Common myeloid progenitor, CD34-positive (primary cell): ENCODE measurements at regions of chr16 and their contacts with region 1.

Region 1: DNA sequence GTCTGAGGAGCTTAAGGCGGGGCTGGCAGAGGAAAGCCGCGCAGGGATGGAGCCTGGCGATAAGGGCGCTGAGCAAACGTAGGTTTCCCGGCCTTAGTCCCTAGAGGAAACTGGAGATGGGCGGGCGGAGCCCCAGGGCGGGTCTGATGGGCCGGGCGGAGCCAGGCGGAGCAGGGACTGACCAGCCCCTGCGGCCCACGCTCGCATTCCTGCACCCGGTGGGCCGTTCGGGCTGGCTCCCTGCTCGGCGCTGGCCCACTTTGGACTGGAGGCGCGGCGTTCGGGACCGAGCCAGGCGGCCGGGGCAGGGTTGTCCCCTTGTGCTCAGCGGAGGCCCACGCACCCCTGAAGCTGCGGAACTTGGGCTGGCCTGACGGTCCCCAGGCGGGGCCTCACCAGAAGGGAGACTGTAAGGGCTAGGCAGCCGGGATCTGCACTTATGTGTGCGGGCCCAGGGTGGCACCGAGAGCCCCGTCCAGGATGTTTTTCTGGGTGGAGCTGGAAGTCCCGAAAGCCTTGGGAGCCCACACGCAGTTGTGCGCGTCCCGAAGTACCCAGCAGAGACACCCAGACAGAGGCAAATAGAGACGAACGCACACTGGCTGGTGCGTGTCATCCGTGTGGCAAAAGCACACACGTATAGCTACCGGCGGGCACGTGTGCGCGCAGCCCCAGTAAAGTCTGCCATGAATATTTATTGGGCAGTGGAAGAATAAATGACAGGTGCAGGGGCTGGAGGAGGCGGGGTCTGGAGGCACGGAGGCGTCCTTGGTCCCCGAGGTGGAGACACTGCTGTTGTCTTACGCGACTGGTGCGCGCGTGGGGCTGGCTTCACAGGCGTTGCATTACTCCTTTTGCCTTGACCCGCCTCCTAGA is 1.4 kb downstream of the PYDC1 start:
- DNase-seq: peak in 2 of 3 donors; percentile 49 to 60
- H3K4me3 ChIP-seq: peak overlapping the region in 6 of 7 experiments; percentile 43 to 70 (median 51)
- H3K27ac ChIP-seq: no peak overlapping the region
- H3K4me1 ChIP-seq: peaks cover 2 to 40% (median 33%) of the 10 kb centered on the region in 4 experiments
- H3K27me3 ChIP-seq: peaks cover 0 to 32% (median 24%) of the 10 kb centered on the region in 5 experiments

Region 2: GRCh38 chr16:30893744-30894539 is 321.6 kb before region 1 on chr16 and contains the start of gene BCL7C:
- CTCF ChIA-PET with region 1: no interaction called
- POLR2A ChIA-PET with region 1: no interaction called
- DNase-seq: peak; percentile 82 to 88 (median 82)
- H3K4me3 ChIP-seq: peak within 1 kb of the TSS; percentile 69 to 93 (median 84)
- H3K27ac ChIP-seq: peak within 1 kb of the TSS; percentile 25 to 84
- H3K4me1 ChIP-seq: peaks cover 3 to 42% (median 36%) of the 10 kb centered on the region in 4 experiments
- H3K27me3 ChIP-seq: no peaks in the 10 kb centered on the region

Region 3: GRCh38 chr16:31202414-31203375 is 12.8 kb before region 1 on chr16 and contains the start of gene PYCARD:
- CTCF ChIA-PET with region 1: interaction called, 12 read pairs
- POLR2A ChIA-PET with region 1: interaction called, 4 read pairs
- DNase-seq: peak in 2 of 3 donors; percentile 52 to 81
- H3K4me3 ChIP-seq: peak within 1 kb of the TSS; percentile 75 to 97 (median 88)
- H3K27ac ChIP-seq: peak within 1 kb of the TSS; percentile 15 to 72
- H3K4me1 ChIP-seq: peaks cover 9 to 56% (median 49%) of the 10 kb centered on the region in 4 experiments
- H3K27me3 ChIP-seq: no peaks in the 10 kb centered on the region

Region 4: DNA sequence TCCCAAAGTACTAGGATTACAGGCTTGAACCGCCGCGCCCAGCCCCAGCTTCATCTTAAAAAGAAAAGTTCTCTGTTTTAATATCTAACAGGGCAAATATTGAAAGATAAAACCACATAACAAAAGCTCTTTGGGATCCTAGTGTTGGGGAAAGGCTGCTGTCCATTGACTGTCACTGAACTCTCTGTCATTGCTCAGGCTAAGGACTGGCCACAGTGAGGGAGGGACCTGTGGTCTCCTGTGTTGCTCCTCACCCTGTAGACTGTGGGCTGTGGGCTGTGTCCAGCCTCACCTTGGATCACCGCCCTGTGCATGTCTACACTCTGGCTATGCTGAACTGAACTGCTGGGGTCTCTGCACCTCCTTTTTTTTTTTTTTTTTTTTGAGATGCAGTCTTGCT is 12.7 kb after region 1 on chr16:
- CTCF ChIA-PET with region 1: interaction called, 12 read pairs
- POLR2A ChIA-PET with region 1: no interaction called
- DNase-seq: no peak
- H3K4me3 ChIP-seq: no peak overlapping the region
- H3K27ac ChIP-seq: no peak overlapping the region
- H3K4me1 ChIP-seq: peaks cover 0 to 6% (median 5%) of the 10 kb centered on the region in 4 experiments
- H3K27me3 ChIP-seq: no peaks in the 10 kb centered on the region